Activated B cell treated with CpG ODN at 0.5 μM for 24 hours (primary cell): ENCODE measurements at regions of chr4 and their contacts with region 1.

Region 1: GRCh38 chr4:114642173-114642780 is 43.7 kb downstream of the UGT8 start:
- DNase-seq: no peak
- ATAC-seq: no peak
- H3K4me3 Mint-ChIP-seq: no peak overlapping the region
- H3K27ac Mint-ChIP-seq: no peak overlapping the region
- H3K4me1 Mint-ChIP-seq: peaks cover 28% of the 10 kb centered on the region
- H3K27me3 Mint-ChIP-seq: no peaks in the 10 kb centered on the region
- CTCF ChIP-seq: no peak

Region 2: DNA sequence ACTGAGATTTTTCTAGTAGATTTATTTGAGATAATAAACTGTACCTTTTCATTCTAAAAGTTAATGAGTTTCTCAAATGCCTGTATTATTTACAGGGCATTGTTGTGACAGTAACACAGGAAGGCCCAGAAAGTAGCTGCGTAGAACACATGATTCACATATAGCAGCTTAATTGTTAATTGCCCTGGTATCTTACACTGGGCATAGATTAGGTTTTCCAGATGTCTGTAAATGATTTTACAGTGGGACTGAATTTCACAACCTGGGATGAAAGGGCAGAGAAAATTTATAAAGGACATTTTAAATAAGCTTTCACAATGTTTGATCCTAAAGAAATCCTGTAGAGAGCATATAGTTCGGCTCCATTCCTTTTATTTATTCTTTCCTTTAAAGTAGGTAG is 16.1 kb before region 1 on chr4:
- CTCF ChIA-PET with region 1: no interaction called
- POLR2A ChIA-PET with region 1: no interaction called
- intact Hi-C with region 1: loop called (anchors 2 kb)
- DNase-seq: no peak
- ATAC-seq: no peak
- H3K4me3 Mint-ChIP-seq: no peak overlapping the region
- H3K27ac Mint-ChIP-seq: no peak overlapping the region
- H3K4me1 Mint-ChIP-seq: peaks cover 30% of the 10 kb centered on the region
- H3K27me3 Mint-ChIP-seq: no peaks in the 10 kb centered on the region
- CTCF ChIP-seq: no peak